Activated CD4-positive, alpha-beta memory T cell treated with anti-CD3 and anti-CD28 coated beads for 36 hours (primary cell): ENCODE measurements at regions of chr19 and their contacts with region 1.

Region 1: GRCh38 chr19:1438035-1438932 is at the start of gene RPS15:
- DNase-seq: peak; percentile 97
- H3K4me3 Mint-ChIP-seq: peak within 1 kb of the TSS; percentile 99
- H3K27ac Mint-ChIP-seq: peak within 1 kb of the TSS; percentile 98
- H3K4me1 Mint-ChIP-seq: peaks cover 36% of the 10 kb centered on the region
- H3K27me3 Mint-ChIP-seq: no peaks in the 10 kb centered on the region
- total RNA-seq, gene RPS15: 1,642 to 1,717 TPM

Region 2: DNA sequence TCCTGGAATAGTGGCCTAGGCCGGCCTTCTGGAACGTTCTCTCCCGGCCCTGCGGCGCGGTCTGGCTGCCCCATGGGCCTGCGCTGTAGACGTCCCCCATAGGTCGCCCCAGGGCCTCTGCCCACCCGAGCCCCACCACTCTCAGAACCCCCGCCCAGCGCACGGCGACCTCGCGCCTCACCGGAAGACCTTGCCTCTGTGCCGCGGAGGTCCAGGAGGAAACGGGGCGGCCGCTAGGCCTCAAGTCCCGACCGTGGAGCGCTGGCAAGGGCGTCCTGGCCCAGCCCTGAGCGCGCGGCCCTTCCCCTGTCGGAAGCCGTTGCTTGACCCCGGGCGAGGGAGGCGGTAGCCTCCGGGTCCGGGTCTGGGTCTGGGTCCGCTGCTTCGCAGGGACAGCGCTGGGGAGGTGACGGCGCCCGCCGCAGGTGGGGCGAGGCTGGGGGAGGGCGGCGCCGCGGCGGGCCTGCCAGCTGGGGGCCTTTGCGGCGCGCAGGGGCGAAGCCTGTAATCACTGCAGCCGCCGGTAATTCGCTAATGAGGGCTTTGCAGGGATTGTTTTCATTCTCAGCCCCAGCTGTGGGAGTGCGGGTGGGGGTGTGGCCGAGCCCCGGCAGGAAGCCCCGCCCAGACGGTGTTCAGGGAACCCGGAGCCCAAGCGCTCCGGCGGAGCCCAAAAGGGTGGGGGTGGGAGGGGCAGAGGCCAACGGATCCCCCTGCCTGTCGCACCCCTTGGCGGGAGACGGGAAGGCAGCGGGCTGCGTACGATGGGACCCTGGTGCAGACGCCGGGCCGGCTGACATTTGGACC is 32.1 kb after region 1 on chr19:
- CTCF ChIA-PET with region 1: no interaction called
- POLR2A ChIA-PET with region 1: interaction called, 4 read pairs
- intact Hi-C with region 1: loop called (anchors 5 kb)
- DNase-seq: peak; percentile 77
- H3K4me3 Mint-ChIP-seq: peak overlapping the region; percentile 53
- H3K27ac Mint-ChIP-seq: no peak overlapping the region
- H3K4me1 Mint-ChIP-seq: peaks cover 9% of the 10 kb centered on the region
- H3K27me3 Mint-ChIP-seq: peaks cover 8% of the 10 kb centered on the region